CD4-positive, alpha-beta memory T cell (primary cell): ENCODE measurements at regions of chr19 and their contacts with region 1.

Region 1: DNA sequence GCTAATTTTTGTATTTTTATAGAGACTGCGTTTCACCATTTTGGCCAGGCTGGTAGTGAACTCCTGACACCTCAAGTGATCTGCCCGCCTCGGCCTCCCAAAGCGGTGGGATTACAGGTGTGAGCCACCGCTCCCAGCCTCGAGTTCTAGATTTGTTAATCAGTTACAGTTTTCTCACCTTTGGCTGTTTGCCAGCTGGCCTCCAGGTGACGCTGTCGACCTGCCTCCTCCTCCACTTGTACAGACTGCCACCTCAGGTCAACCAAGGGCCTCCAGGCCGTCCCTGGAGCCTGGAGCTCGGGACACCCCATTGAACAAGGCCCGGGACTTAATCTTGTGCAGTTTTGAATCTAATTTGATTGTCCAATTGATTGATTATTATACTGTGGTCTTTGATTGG is 45.5 kb downstream of the IER2 start:
- DNase-seq: peak; percentile 60 to 66 (median 62)
- H3K4me3 ChIP-seq: no peak overlapping the region
- H3K4me3 Mint-ChIP-seq: peak overlapping the region in 6 of 8 donors; percentile 9 to 68 (median 56)
- H3K27ac ChIP-seq: no peak overlapping the region
- H3K27ac Mint-ChIP-seq: peak overlapping the region in 6 of 7 donors; percentile 52 to 91 (median 75)
- H3K4me1 ChIP-seq: peaks cover 39% of the 10 kb centered on the region
- H3K4me1 Mint-ChIP-seq: peaks cover 12 to 32% (median 23%) of the 10 kb centered on the region in 4 donors
- H3K27me3 ChIP-seq: no peaks in the 10 kb centered on the region
- H3K27me3 Mint-ChIP-seq: no peaks in the 10 kb centered on the region

Region 2: GRCh38 chr19:12974301-12975220 is 221.1 kb before region 1 on chr19:
- CTCF ChIA-PET with region 1: interaction called, 12 read pairs
- POLR2A ChIA-PET with region 1: no interaction called
- intact Hi-C with region 1: no loop called
- DNase-seq: no peak
- H3K4me3 ChIP-seq: no peak overlapping the region
- H3K4me3 Mint-ChIP-seq: no peak overlapping the region
- H3K27ac ChIP-seq: no peak overlapping the region
- H3K27ac Mint-ChIP-seq: no peak overlapping the region
- H3K4me1 ChIP-seq: no peaks in the 10 kb centered on the region
- H3K4me1 Mint-ChIP-seq: peaks cover 0 to 7% (median 3%) of the 10 kb centered on the region in 4 donors
- H3K27me3 ChIP-seq: no peaks in the 10 kb centered on the region
- H3K27me3 Mint-ChIP-seq: peaks cover 7 to 8% of the 10 kb centered on the region in 2 donors

Region 3: GRCh38 chr19:13162518-13163314 is 33.0 kb before region 1 on chr19:
- CTCF ChIA-PET with region 1: interaction called, 52 read pairs
- POLR2A ChIA-PET with region 1: interaction called, 32 read pairs
- intact Hi-C with region 1: loop called (anchors 1 kb)
- DNase-seq: peak; percentile 69 to 89 (median 72)
- H3K4me3 ChIP-seq: peak overlapping the region; percentile 58 to 91
- H3K4me3 Mint-ChIP-seq: peak overlapping the region; percentile 83 to 91 (median 88)
- H3K27ac ChIP-seq: peak overlapping the region; percentile 82
- H3K27ac Mint-ChIP-seq: peak overlapping the region; percentile 94 to 99 (median 97)
- H3K4me1 ChIP-seq: peaks cover 96% of the 10 kb centered on the region
- H3K4me1 Mint-ChIP-seq: peaks cover 42 to 85% (median 63%) of the 10 kb centered on the region in 4 donors
- H3K27me3 ChIP-seq: no peaks in the 10 kb centered on the region
- H3K27me3 Mint-ChIP-seq: no peaks in the 10 kb centered on the region

Region 4: DNA sequence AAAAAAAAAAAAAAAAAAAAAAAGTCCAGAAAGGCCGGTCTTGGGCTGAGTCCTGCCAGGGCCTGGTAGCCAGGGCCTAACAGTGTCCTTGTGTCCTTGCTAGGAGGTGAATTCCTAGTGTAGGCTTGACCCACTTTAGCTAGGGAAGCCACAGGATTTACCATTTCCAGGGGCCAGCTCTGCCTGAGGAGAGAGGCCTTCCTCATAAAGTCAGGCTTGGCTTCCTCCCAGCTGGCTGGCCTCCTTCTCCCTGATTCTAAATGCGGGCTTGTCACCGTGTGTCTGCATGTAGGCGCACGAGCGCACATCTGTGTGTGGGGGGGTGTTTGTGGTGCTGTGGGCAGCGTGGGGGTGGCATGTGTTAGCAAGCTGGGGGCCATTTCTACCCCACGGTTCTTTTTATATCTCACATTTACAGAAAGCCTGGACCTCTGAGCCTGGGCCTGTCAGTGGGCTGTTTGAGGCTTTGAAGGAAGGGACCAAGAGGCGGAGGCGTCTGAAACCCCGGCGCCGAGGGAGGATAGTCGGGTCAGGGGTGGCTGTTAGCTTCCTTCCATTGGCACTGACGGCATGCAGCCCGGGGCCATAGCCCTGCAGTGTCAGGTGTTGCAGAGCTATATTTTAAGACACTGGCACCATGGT is 13.8 kb before region 1 on chr19:
- CTCF ChIA-PET with region 1: interaction called, 91 read pairs
- POLR2A ChIA-PET with region 1: interaction called, 5 read pairs
- intact Hi-C with region 1: no loop called
- DNase-seq: no peak
- H3K4me3 ChIP-seq: no peak overlapping the region
- H3K4me3 Mint-ChIP-seq: peak overlapping the region in 7 of 8 donors; percentile 13 to 79 (median 63)
- H3K27ac ChIP-seq: no peak overlapping the region
- H3K27ac Mint-ChIP-seq: peak overlapping the region in 6 of 7 donors; percentile 44 to 91 (median 58)
- H3K4me1 ChIP-seq: peaks cover 18% of the 10 kb centered on the region
- H3K4me1 Mint-ChIP-seq: peaks cover 16 to 38% (median 27%) of the 10 kb centered on the region in 4 donors
- H3K27me3 ChIP-seq: no peaks in the 10 kb centered on the region
- H3K27me3 Mint-ChIP-seq: no peaks in the 10 kb centered on the region

Region 5: DNA sequence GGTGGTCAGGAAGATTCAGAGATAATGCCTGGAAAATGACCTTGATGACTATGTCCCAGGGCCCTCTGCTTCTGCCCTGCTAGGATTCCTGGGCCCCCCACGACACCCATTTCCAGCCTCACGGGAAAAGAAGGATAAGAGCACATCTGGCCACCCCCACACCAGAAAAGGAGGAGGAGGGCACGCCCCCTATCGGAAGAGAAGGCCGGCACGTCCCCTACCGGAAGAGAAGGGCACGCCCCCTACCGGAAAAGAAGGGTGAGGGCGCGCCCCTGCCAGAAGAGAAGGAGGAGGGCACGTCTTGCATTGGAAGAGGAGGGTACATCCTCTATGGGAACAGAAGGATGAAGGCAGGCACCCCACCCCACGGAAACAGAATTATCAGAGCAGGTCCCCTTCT is 38.8 kb after region 1 on chr19:
- CTCF ChIA-PET with region 1: interaction called, 16 read pairs
- POLR2A ChIA-PET with region 1: no interaction called
- intact Hi-C with region 1: loop called (anchors 1 kb)
- DNase-seq: peak; percentile 41 to 66 (median 56)
- H3K4me3 ChIP-seq: no peak overlapping the region
- H3K4me3 Mint-ChIP-seq: peak overlapping the region; percentile 7 to 82 (median 46)
- H3K27ac ChIP-seq: no peak overlapping the region
- H3K27ac Mint-ChIP-seq: peak overlapping the region in 2 of 7 donors; percentile 60 to 87
- H3K4me1 ChIP-seq: peaks cover 13% of the 10 kb centered on the region
- H3K4me1 Mint-ChIP-seq: peaks cover 7 to 13% (median 13%) of the 10 kb centered on the region in 4 donors
- H3K27me3 ChIP-seq: no peaks in the 10 kb centered on the region
- H3K27me3 Mint-ChIP-seq: peaks cover 2 to 3% of the 10 kb centered on the region in 2 donors